ENCODE measurements at regions of chr12 and their contacts with region 1.

Region 1: GRCh38 chr12:8949342-8950220 is at the start of gene M6PR:
- DNase-seq: peak; percentile 71 to 95 (median 88)
- ATAC-seq: peak; percentile 72
- H3K4me3 ChIP-seq: peak within 1 kb of the TSS; percentile 97 to 98
- H3K4me3 Mint-ChIP-seq: peak within 1 kb of the TSS; percentile 94
- H3K27ac ChIP-seq: peak within 1 kb of the TSS; percentile 96 to 100
- H3K27ac Mint-ChIP-seq: peak within 1 kb of the TSS; percentile 95
- H3K4me1 ChIP-seq: peaks cover 58% of the 10 kb centered on the region
- H3K4me1 Mint-ChIP-seq: peaks cover 68% of the 10 kb centered on the region
- H3K27me3 ChIP-seq: no peaks in the 10 kb centered on the region
- H3K27me3 Mint-ChIP-seq: no peaks in the 10 kb centered on the region
- CTCF ChIP-seq: peak; percentile 48
- total RNA-seq, gene M6PR: 43.1 to 43.7 TPM

Region 2: DNA sequence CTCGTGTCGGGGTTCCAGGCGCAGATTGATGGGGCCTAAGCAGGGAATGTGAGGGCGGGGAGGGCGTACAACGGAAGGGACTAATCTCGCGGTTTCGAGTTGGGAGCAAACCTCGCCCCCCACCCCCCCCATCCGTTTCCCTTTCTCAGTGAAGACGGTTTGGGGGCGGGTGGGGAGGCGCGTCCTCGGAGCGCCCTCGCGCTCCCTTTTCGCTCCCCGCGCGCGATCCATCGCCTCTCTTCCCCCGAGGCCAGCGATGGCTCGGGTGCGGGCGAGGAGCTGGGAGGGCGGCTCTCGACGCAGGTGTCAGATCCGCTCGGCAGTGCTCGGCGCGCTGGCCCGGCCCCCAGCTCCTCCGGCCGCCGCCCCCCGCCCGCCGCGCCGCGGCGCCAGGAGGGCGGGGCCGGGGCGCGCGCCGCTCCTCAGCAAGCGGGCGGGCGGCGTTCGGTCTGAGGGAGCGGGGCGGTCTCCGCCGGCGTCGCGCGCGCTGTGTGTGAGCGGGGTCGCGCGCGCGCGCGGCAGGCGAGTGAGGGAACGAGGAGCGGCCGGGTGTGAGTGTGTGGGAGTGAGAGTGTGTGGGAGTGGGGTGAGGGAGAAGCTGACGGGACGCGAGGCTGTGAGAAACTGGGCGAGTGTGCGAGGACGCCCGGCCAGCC is 252.0 kb before region 1 on chr12 and contains the start of gene RIMKLB:
- CTCF ChIA-PET with region 1: interaction called, 4 read pairs
- POLR2A ChIA-PET with region 1: interaction called, 3 read pairs
- intact Hi-C with region 1: loop called (anchors 1 to 5 kb)
- DNase-seq: peak; percentile 55 to 91 (median 79)
- ATAC-seq: peak; percentile 85
- H3K4me3 ChIP-seq: peak within 1 kb of the TSS; percentile 80 to 95
- H3K4me3 Mint-ChIP-seq: peak within 1 kb of the TSS; percentile 96
- H3K27ac ChIP-seq: peak within 1 kb of the TSS; percentile 68 to 69
- H3K27ac Mint-ChIP-seq: peak within 1 kb of the TSS; percentile 91
- H3K4me1 ChIP-seq: peaks cover 17% of the 10 kb centered on the region
- H3K4me1 Mint-ChIP-seq: peaks cover 32% of the 10 kb centered on the region
- H3K27me3 ChIP-seq: no peaks in the 10 kb centered on the region
- H3K27me3 Mint-ChIP-seq: no peaks in the 10 kb centered on the region
- CTCF ChIP-seq: no peak
- total RNA-seq, gene RIMKLB: 10.1 to 12.2 TPM

Region 3: GRCh38 chr12:8844665-8845064 is 104.9 kb before region 1 on chr12:
- CTCF ChIA-PET with region 1: no interaction called
- POLR2A ChIA-PET with region 1: no interaction called
- intact Hi-C with region 1: no loop called
- DNase-seq: no peak
- ATAC-seq: no peak
- H3K4me3 ChIP-seq: no peak overlapping the region
- H3K4me3 Mint-ChIP-seq: no peak overlapping the region
- H3K27ac ChIP-seq: no peak overlapping the region
- H3K27ac Mint-ChIP-seq: no peak overlapping the region
- H3K4me1 ChIP-seq: no peaks in the 10 kb centered on the region
- H3K4me1 Mint-ChIP-seq: peaks cover 1% of the 10 kb centered on the region
- H3K27me3 ChIP-seq: no peaks in the 10 kb centered on the region
- H3K27me3 Mint-ChIP-seq: peaks cover 20% of the 10 kb centered on the region
- CTCF ChIP-seq: no peak

Region 4: DNA sequence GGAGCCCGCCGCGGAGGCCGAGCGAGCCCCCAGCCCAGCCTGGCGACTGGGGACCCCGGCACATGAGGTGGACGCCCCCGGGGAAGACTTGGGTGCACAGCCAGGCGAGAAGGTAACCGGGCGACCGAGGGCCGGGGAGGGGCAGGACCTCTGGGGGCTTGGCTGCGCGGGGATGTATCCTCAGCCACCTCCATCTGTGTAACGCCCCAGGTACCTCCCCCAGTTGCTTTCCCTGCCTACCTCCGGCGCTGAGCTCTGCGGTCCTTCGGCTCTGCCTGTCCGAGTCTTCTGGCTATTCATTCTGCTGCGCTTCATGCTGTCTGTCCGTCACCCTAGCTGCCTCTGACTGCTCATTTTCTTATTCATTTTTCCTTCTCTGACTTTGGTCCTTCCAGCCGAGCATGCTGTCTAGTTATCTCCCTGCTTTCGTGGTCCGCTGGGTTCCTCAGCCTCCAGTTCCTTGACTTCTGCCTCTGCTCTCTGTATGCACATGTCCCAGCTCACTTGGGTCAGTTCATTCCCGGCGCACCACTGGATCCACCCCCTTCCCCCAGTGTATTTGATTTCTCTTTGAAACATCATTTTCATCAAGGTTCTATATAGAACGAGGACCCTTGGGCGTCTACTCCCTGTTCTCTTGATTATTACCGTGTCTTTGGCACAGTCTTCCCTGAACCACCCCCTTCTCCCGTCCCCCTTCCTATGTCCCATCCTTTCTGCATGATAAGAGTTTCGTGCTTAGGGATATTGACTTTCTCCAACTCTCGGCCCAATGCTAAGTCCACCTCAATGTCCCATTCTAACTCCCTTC is 34.7 kb before region 1 on chr12:
- CTCF ChIA-PET with region 1: interaction called, 25 read pairs
- POLR2A ChIA-PET with region 1: interaction called, 20 read pairs
- intact Hi-C with region 1: loop called (anchors 1 kb)
- DNase-seq: peak; percentile 26 to 81 (median 60)
- ATAC-seq: peak; percentile 81
- H3K4me3 ChIP-seq: peak overlapping the region; percentile 79 to 82
- H3K4me3 Mint-ChIP-seq: no peak overlapping the region
- H3K27ac ChIP-seq: peak overlapping the region; percentile 44 to 61
- H3K27ac Mint-ChIP-seq: no peak overlapping the region
- H3K4me1 ChIP-seq: peaks cover 23% of the 10 kb centered on the region
- H3K4me1 Mint-ChIP-seq: peaks cover 13% of the 10 kb centered on the region
- H3K27me3 ChIP-seq: no peaks in the 10 kb centered on the region
- H3K27me3 Mint-ChIP-seq: no peaks in the 10 kb centered on the region
- CTCF ChIP-seq: no peak

Region 5: GRCh38 chr12:8989413-8989812 is 39.8 kb after region 1 on chr12 and contains the start of gene KLRG1:
- CTCF ChIA-PET with region 1: interaction called, 7 read pairs
- POLR2A ChIA-PET with region 1: interaction called, 5 read pairs
- intact Hi-C with region 1: loop called (anchors 1 to 5 kb)
- DNase-seq: peak in 2 of 9 experiments; percentile 41 to 62
- ATAC-seq: peak; percentile 60
- H3K4me3 ChIP-seq: peak within 1 kb of the TSS; percentile 40 to 63
- H3K4me3 Mint-ChIP-seq: peak within 1 kb of the TSS; percentile 79
- H3K27ac ChIP-seq: peak within 1 kb of the TSS; percentile 54 to 83
- H3K27ac Mint-ChIP-seq: peak within 1 kb of the TSS; percentile 75
- H3K4me1 ChIP-seq: peaks cover 60% of the 10 kb centered on the region
- H3K4me1 Mint-ChIP-seq: peaks cover 72% of the 10 kb centered on the region
- H3K27me3 ChIP-seq: no peaks in the 10 kb centered on the region
- H3K27me3 Mint-ChIP-seq: no peaks in the 10 kb centered on the region
- CTCF ChIP-seq: no peak
- total RNA-seq, gene KLRG1: 13.8 to 17.7 TPM

Region 6: GRCh38 chr12:9027161-9028059 is 77.8 kb after region 1 on chr12:
- CTCF ChIA-PET with region 1: interaction called, 195 read pairs
- POLR2A ChIA-PET with region 1: interaction called, 20 read pairs
- intact Hi-C with region 1: loop called in 1 of 2 experiments (anchors 1 kb)
- DNase-seq: peak in 4 of 9 experiments; percentile 20 to 59 (median 28)
- ATAC-seq: no peak
- H3K4me3 ChIP-seq: no peak overlapping the region
- H3K4me3 Mint-ChIP-seq: peak overlapping the region; percentile 38
- H3K27ac ChIP-seq: peak overlapping the region in 1 of 2 experiments; percentile 86
- H3K27ac Mint-ChIP-seq: peak overlapping the region; percentile 95
- H3K4me1 ChIP-seq: peaks cover 79% of the 10 kb centered on the region
- H3K4me1 Mint-ChIP-seq: peaks cover 50% of the 10 kb centered on the region
- H3K27me3 ChIP-seq: no peaks in the 10 kb centered on the region
- H3K27me3 Mint-ChIP-seq: no peaks in the 10 kb centered on the region
- CTCF ChIP-seq: no peak

Region 7: DNA sequence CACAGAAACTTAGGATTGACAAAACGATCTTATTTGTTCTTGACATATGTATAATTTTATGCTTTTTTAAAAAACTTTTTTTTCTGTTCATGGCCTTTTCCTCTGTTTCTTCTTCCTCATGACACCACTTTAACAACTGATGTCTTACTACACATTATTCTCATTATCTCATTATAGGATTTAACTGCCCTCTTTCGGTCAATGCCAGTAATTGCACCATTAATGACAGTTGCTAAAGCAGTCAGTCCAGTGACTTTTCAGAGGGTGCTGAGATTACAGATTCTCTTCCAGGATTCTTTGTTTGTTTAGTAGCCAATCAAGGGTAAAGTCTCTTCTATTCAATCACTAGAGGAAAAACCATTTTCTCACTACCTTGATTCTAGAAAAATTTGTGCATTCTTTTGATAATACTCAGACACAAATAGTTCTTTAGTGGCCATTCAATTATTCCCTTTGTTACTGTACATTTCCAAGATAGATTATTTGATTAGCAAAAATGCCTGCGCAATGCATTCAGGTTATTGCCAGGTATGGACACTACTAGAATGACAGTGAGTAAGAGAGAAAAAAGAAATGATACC is 89.9 kb after region 1 on chr12:
- CTCF ChIA-PET with region 1: interaction called, 224 read pairs
- POLR2A ChIA-PET with region 1: interaction called, 17 read pairs
- intact Hi-C with region 1: loop called (anchors 1 kb)
- DNase-seq: peak in 2 of 9 experiments; percentile 68 to 79
- ATAC-seq: peak; percentile 93
- H3K4me3 ChIP-seq: no peak overlapping the region
- H3K4me3 Mint-ChIP-seq: no peak overlapping the region
- H3K27ac ChIP-seq: peak overlapping the region in 1 of 2 experiments; percentile 51
- H3K27ac Mint-ChIP-seq: peak overlapping the region; percentile 21
- H3K4me1 ChIP-seq: peaks cover 36% of the 10 kb centered on the region
- H3K4me1 Mint-ChIP-seq: peaks cover 51% of the 10 kb centered on the region
- H3K27me3 ChIP-seq: no peaks in the 10 kb centered on the region
- H3K27me3 Mint-ChIP-seq: no peaks in the 10 kb centered on the region
- CTCF ChIP-seq: peak; percentile 96

Region 8: DNA sequence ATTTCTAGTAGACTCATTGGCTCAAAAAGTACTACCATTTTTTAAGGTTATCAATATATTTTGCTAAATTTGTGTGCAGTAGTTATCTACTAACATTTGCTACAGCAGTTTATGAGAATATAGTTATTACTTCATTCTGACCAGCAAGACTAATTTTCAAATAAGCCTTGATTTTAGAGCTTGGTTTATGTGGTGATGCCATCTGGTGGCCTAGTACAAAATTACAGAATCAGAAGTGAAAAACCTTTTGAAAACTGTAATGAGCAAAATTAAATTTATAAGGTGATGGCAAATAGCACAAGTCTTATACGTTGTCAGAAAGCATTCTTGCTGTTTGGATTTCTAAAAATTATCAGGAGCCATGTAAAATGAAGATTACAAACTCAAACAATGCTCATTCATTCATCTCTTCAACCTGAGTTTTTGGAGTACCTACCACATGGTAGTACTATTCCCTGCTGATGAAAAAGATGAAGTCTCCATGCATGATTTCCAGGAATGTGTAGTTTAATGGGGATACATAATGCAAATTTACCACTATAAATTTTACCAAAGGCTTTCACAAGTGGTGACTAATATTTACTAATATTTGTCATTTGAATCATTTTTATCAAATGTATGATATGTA is 1612.8 kb after region 1 on chr12:
- CTCF ChIA-PET with region 1: no interaction called
- POLR2A ChIA-PET with region 1: no interaction called
- intact Hi-C with region 1: loop called in 1 of 2 experiments (anchors 10 kb)
- DNase-seq: peak in 4 of 9 experiments; percentile 29 to 79 (median 62)
- ATAC-seq: no peak
- H3K4me3 ChIP-seq: no peak overlapping the region
- H3K4me3 Mint-ChIP-seq: peak overlapping the region; percentile 11
- H3K27ac ChIP-seq: no peak overlapping the region
- H3K27ac Mint-ChIP-seq: peak overlapping the region; percentile 80
- H3K4me1 ChIP-seq: peaks cover 70% of the 10 kb centered on the region
- H3K4me1 Mint-ChIP-seq: peaks cover 83% of the 10 kb centered on the region
- H3K27me3 ChIP-seq: no peaks in the 10 kb centered on the region
- H3K27me3 Mint-ChIP-seq: no peaks in the 10 kb centered on the region
- CTCF ChIP-seq: peak; percentile 98

Measured in CD8-positive, alpha-beta T cell (primary cell).